ENCODE measurements at regions of chr6 and their contacts with region 1.

Region 1: GRCh38 chr6:79949233-79949632 is 1.9 kb upstream of the ELOVL4 start:
- DNase-seq: peak; percentile 10
- H3K4me3 ChIP-seq: no peak overlapping the region
- CTCF ChIP-seq: peak; percentile 55

Region 2: GRCh38 chr6:79802657-79803300 is 146.5 kb before region 1 on chr6:
- CTCF ChIA-PET with region 1: no interaction called
- POLR2A ChIA-PET with region 1: no interaction called
- DNase-seq: no peak
- H3K4me3 ChIP-seq: no peak overlapping the region
- CTCF ChIP-seq: no peak

Region 3: GRCh38 chr6:79964607-79965081 is 15.4 kb after region 1 on chr6:
- CTCF ChIA-PET with region 1: interaction called, 11 read pairs
- POLR2A ChIA-PET with region 1: no interaction called
- DNase-seq: no peak
- H3K4me3 ChIP-seq: no peak overlapping the region
- CTCF ChIP-seq: no peak

Region 4: DNA sequence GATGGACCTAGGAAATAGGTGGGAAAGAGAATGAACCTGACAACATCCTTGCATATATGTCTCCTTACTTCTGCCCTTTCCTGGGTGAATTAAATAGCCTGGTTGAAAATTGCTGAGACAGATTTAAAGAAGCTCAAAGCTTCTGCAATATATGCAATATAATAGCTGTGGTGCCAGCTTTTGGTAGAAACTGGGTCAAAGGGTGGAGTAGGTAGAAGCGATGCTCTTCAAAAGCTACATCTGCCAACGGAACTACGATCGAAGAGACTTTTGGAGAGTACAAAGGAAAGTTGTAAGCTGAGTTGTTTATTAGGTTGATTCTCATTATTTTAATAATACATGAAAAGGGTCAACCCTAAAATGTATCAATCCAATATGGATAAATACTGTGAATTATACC is 32.4 kb after region 1 on chr6:
- CTCF ChIA-PET with region 1: interaction called, 10 read pairs
- POLR2A ChIA-PET with region 1: no interaction called
- DNase-seq: no peak
- H3K4me3 ChIP-seq: no peak overlapping the region
- CTCF ChIP-seq: no peak

Region 5: DNA sequence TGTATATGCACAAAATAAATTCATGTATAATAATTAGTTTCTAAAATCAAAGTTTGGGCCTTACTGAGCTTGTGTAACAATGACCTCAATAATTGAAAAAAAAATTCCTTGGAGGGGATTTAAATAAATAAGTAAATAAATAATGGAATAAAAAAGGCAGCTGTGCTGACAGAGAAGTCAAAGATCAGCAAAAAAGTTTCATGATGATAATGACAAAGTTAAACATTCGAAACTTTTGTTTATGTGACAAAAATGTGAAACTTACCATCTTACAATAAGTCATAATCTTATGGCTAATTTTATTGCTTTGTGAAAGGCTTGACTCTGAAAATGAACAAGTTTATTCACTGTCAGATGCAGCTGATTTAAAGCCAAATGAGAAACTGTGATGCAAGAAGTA is 52.1 kb after region 1 on chr6:
- CTCF ChIA-PET with region 1: interaction called, 13 read pairs
- POLR2A ChIA-PET with region 1: no interaction called
- DNase-seq: no peak
- H3K4me3 ChIP-seq: no peak overlapping the region
- CTCF ChIP-seq: no peak

Region 6: GRCh38 chr6:80094017-80094416 is 144.8 kb after region 1 on chr6:
- CTCF ChIA-PET with region 1: interaction called, 79 read pairs
- POLR2A ChIA-PET with region 1: no interaction called
- DNase-seq: no peak
- H3K4me3 ChIP-seq: no peak overlapping the region
- CTCF ChIP-seq: peak; percentile 30

Measured in AG04449 (cell line).